Heart left ventricle (tissue), 16 donors: ENCODE measurements at regions of chrX and their contacts with region 1.

Region 1: GRCh38 chrX:22081475-22082092 is 49.5 kb downstream of the PHEX start:
- DNase-seq: peak; percentile 25 to 51 (median 46)
- ATAC-seq: peak in 2 of 4 donors; percentile 52 to 56
- H3K4me3 ChIP-seq: no peak overlapping the region
- H3K27ac ChIP-seq: no peak overlapping the region
- H3K4me1 ChIP-seq: no peaks in the 10 kb centered on the region
- H3K27me3 ChIP-seq: peaks cover 0 to 6% (median 0%) of the 10 kb centered on the region in 9 donors
- CTCF ChIP-seq: peak; percentile 33 to 72 (median 48)
- POLR2A ChIP-seq: no peak

Region 2: DNA sequence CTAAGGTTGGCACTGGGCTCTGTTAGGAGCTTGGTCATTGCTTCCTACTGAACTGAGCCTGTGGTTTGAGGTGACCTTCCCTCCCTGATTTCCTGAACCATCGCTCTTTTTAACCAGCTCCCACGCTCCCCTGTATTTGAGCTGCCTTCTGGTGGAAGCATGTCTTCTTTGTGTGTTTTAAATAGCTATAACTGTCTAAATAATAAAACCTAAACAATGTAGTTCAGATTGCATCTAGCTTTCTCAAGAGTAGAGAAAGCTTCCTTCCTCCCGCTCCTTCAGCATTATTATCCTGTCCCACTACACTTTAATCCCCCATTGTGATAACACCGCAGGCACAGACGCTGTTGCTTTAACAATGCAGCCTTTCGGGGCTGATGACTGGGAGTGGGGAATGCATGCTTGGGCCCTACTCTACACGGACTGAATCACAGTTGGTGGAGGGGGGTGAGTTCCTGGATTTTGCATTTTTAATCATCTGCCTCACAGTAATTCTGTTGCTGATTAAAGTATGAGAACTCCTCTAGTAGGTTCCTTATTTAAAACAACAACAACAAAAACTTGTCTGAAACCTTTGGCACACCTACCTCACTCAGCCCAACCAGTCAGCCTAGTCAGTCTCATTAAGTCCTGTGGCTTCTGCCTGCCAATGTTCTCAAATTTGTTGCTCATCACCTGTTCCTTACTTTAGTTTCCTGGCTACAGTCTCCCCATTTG is 134.5 kb before region 1 on chrX:
- intact Hi-C with region 1: no loop called
- DNase-seq: no peak
- ATAC-seq: peak in 3 of 4 donors; percentile 23 to 49 (median 43)
- H3K4me3 ChIP-seq: no peak overlapping the region
- H3K27ac ChIP-seq: peak overlapping the region in 9 of 12 donors; percentile 3 to 47 (median 23)
- H3K4me1 ChIP-seq: peaks cover 0 to 50% (median 13%) of the 10 kb centered on the region in 12 donors
- H3K27me3 ChIP-seq: peaks cover 0 to 3% (median 0%) of the 10 kb centered on the region in 9 donors
- CTCF ChIP-seq: no peak
- POLR2A ChIP-seq: no peak

Region 3: DNA sequence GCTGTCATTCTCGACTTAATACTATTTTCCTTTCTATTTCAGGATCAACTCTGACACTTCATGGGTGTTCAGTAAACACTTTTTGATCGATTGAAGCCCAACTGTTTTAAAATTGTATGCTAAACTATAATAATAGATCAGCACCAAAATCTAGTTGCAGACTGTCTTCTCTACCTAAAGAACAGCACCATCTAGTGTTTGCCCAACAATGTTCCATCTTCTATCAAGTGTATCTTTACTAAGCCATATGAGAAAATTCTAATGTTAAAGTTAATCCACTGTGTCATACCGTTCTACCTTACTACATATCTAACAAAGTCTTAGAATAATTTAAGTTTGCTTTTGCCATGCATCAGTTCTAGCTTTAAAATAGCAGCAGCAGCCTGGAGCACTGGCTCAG is 1472.7 kb after region 1 on chrX:
- intact Hi-C with region 1: loop called in 1 of 10 experiments (anchors 5 kb)
- DNase-seq: no peak
- ATAC-seq: no peak
- H3K4me3 ChIP-seq: no peak overlapping the region
- H3K27ac ChIP-seq: no peak overlapping the region
- H3K4me1 ChIP-seq: no peaks in the 10 kb centered on the region
- H3K27me3 ChIP-seq: peaks cover 0 to 13% (median 0%) of the 10 kb centered on the region in 9 donors
- CTCF ChIP-seq: peak in 11 of 12 donors; percentile 25 to 56 (median 45)
- POLR2A ChIP-seq: no peak